Mammary epithelial cell (primary cell): ENCODE measurements at regions of chr2 and their contacts with region 1.

Region 1: DNA sequence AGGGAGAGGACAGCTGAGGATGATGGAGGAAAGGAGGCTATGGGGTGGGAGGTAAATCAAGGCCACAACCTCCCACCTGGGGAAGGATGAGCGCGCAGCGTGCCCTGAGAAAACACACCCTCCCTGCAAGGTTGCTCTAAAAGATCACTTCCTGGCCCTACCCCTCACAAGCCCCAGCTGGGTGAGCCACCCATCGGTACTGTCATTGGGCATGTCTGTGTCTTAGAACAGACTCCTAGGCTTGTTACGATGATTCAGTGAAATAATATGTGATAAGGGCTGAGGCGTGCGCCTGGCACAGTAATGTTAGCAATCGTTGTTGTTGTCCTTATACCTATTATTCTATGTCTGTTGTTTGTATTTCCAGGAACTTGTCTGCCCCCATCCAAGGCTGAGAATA is 175.1 kb downstream of the ZFP36L2 start:
- DNase-seq: peak; percentile 89
- H3K4me3 ChIP-seq: no peak overlapping the region
- H3K27ac ChIP-seq: peak overlapping the region; percentile 85
- H3K4me1 ChIP-seq: peaks cover 36% of the 10 kb centered on the region
- H3K27me3 ChIP-seq: no peaks in the 10 kb centered on the region
- CTCF ChIP-seq: no peak

Region 2: DNA sequence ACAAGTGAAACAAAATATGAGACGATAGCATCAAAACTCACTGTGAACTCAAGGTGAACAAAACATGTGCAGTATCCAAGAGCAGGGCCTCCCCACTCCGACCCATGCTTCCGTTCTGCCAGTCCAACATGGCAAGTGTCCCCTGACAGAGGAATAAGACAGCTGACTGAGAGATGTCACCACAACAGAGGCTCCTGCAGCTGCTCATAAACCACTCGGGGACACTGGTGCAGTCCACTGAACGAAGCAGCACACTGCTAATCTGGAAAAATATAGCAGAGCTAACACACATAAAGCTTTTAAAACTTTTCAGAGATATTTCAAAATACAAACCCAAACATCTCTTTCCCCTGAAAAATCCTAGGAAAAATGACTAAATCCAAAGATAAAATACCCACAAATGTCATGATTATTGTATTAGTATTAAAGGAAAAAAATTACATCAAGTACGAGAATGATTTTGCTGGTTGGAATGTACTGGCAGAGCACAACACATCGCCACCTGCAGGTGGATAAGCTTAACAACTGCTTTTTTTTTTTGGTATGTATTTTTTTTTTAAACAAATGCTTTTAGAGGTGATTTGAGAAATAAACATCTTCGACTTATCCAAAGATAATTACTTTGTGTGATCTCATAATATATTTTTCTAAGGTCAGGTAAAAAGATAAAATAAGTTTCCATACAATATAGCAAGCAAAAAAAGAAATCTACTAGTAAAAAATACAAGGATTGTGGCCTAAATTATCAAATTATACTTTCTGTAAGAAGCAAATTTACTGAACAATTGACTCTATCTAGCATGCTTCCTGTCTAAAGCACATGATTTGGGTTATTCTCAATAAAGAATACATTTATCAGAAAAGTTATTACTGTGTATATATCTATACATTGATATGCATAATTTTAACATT is 525.9 kb after region 1 on chr2:
- CTCF ChIA-PET with region 1: interaction called, 13 read pairs
- dilution Hi-C with region 1: no loop called
- in situ Hi-C with region 1: no loop called
- intact Hi-C with region 1: no loop called
- DNase-seq: peak; percentile 27
- H3K4me3 ChIP-seq: no peak overlapping the region
- H3K27ac ChIP-seq: no peak overlapping the region
- H3K4me1 ChIP-seq: peaks cover 3% of the 10 kb centered on the region
- H3K27me3 ChIP-seq: no peaks in the 10 kb centered on the region
- CTCF ChIP-seq: peak; percentile 77 to 84